ENCODE measurements at regions of chr1 and their contacts with region 1.

Region 1: DNA sequence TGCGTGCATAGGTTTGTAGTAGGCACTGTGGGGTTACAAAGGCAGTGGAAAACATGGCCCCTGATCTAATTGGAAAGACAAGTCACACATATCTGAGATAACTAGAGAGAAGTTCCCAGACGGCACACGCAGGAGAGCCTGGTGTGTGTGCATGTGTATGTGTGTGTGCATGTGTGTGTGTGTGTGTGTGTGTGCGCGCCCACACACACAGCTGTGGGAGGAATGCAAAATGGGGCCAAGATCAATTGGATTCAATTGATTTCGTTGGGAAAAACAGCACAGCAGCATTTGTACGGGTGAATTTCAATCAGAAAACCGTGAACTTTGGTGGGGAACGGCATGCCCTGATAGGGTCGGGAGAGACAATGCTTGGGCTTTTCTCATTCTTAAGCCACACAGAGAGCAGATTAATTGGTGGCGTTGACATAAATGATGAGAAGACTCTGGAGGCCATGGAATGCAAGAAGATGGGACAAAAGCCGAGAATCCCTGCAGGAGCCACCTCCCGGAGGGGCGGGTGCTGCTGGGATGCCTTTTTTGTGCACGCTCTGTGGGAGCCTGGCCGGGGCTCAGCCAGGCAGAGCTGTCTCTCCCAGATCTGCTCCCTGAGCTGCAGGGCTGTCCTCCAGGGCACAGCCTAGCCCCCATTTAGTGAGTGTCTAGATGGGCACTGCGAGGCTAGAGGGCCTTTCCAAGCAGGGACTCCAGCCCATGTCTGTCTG is 322.0 kb downstream of the CAMTA1 start:
- DNase-seq: no peak
- ATAC-seq: no peak
- H3K4me3 ChIP-seq: no peak overlapping the region
- H3K27ac ChIP-seq: no peak overlapping the region
- H3K4me1 ChIP-seq: no peaks in the 10 kb centered on the region
- H3K27me3 ChIP-seq: peaks cover 52% of the 10 kb centered on the region
- CTCF ChIP-seq: no peak

Region 2: DNA sequence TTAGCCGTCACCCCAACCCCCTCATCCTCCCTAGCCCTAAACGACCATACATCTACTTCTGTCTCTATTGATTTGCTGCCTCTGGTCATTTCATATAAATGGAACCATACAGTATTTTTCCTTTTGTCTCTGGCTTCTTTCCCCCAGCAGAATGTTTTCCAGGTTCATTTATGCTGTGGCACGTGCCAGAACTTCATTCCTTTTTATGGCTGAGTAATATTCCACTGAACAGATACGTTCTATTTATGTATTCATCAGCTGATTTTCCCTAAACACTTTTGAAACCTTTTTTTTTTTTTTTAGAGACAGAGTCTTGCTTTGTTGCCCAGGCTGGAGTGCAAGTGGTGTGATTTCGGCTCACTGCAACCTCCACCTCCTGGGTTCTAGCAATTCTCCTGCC is 140.9 kb before region 1 on chr1:
- CTCF ChIA-PET with region 1: no interaction called
- POLR2A ChIA-PET with region 1: interaction called, 24 read pairs
- intact Hi-C with region 1: no loop called
- DNase-seq: no peak
- ATAC-seq: no peak
- H3K4me3 ChIP-seq: no peak overlapping the region
- H3K27ac ChIP-seq: no peak overlapping the region
- H3K4me1 ChIP-seq: peaks cover 15% of the 10 kb centered on the region
- H3K27me3 ChIP-seq: peaks cover 14% of the 10 kb centered on the region
- CTCF ChIP-seq: no peak

Region 3: GRCh38 chr1:7120863-7121621 is 13.8 kb after region 1 on chr1:
- CTCF ChIA-PET with region 1: no interaction called
- POLR2A ChIA-PET with region 1: no interaction called
- intact Hi-C with region 1: no loop called
- DNase-seq: no peak
- ATAC-seq: no peak
- H3K4me3 ChIP-seq: no peak overlapping the region
- H3K27ac ChIP-seq: no peak overlapping the region
- H3K4me1 ChIP-seq: no peaks in the 10 kb centered on the region
- H3K27me3 ChIP-seq: peaks cover 85% of the 10 kb centered on the region
- CTCF ChIP-seq: no peak; the same call in 1 of the 2 replicates

Region 4: GRCh38 chr1:7186382-7187109 is 79.3 kb after region 1 on chr1:
- CTCF ChIA-PET with region 1: no interaction called
- POLR2A ChIA-PET with region 1: no interaction called
- intact Hi-C with region 1: no loop called
- DNase-seq: no peak
- ATAC-seq: no peak
- H3K4me3 ChIP-seq: no peak overlapping the region
- H3K27ac ChIP-seq: no peak overlapping the region
- H3K4me1 ChIP-seq: no peaks in the 10 kb centered on the region
- H3K27me3 ChIP-seq: peaks cover 23% of the 10 kb centered on the region; the same call in 1 of the 2 replicates
- CTCF ChIP-seq: peak; percentile 23; the same call in 1 of the 2 replicates